ENCODE measurements at regions of chr7 and their contacts with region 1.

Region 1: DNA sequence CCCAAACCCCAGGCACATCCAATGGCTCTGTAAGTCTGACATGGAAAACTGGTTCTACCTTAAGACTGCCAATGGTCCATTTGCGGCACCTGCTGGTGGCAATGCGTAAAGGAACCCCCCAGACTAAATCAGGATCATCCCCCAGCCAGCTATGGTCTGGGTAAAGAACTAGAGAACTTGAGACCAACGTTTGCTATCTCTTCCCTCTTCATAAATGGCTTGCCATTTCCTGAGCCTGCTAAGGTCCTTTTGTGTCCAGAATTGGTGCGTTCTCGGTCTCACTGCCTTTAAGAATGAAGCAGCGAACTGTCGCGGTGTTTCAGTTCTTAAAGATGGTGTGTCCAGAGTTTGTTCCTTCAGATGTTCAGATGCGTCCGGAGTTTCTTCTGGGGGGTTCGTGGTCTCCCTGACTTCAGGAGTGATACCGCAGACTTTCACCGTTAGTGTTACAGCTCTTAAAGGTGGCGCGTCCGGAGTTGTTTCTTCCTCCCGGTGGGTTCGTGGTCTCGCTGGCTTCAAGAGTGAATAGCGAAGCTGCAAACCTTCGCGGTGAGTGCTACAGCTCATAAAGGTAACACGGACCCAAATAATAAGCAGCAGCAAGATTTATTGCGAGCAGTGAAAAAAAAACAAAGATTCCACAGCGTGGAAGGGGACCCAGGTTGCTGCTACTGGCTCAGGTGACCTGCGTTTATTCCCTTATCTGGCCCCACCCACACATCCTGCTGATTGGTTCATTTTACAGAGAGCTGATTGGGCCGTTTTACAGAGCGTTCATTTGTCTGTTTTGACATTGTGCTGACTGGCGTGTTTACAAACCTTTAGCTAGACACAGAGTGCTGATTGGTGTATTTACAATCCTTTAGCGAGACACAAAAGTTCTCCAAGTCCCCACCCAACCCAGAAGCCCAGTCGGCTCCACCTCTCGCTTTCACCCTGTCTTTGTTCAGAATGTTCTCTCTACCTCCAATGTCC is 95.4 kb downstream of the ELMO1 start:
- DNase-seq: peak; percentile 37 to 90 (median 82)
- ATAC-seq: peak; percentile 91
- H3K4me3 ChIP-seq: peak overlapping the region; percentile 93
- H3K4me3 Mint-ChIP-seq: peak overlapping the region; percentile 84 to 98 (median 95)
- H3K27ac ChIP-seq: peak overlapping the region; percentile 75
- H3K27ac Mint-ChIP-seq: peak overlapping the region; percentile 86 to 97 (median 92)
- H3K4me1 ChIP-seq: peaks cover 15 to 44% of the 10 kb centered on the region in 2 donors
- H3K4me1 Mint-ChIP-seq: peaks cover 71 to 97% (median 93%) of the 10 kb centered on the region in 7 donors
- H3K27me3 ChIP-seq: no peaks in the 10 kb centered on the region
- H3K27me3 Mint-ChIP-seq: no peaks in the 10 kb centered on the region

Region 2: GRCh38 chr7:36366718-36367560 is 986.3 kb before region 1 on chr7:
- CTCF ChIA-PET with region 1: no interaction called
- POLR2A ChIA-PET with region 1: no interaction called
- intact Hi-C with region 1: loop called in 1 of 2 experiments (anchors 10 kb)
- DNase-seq: peak; percentile 84 to 92 (median 91)
- ATAC-seq: peak; percentile 98
- H3K4me3 ChIP-seq: peak overlapping the region; percentile 76
- H3K4me3 Mint-ChIP-seq: peak overlapping the region; percentile 80 to 97 (median 93)
- H3K27ac ChIP-seq: peak overlapping the region; percentile 70
- H3K27ac Mint-ChIP-seq: peak overlapping the region in 8 of 9 donors; percentile 51 to 94 (median 82)
- H3K4me1 ChIP-seq: peaks cover 0 to 5% of the 10 kb centered on the region in 2 donors
- H3K4me1 Mint-ChIP-seq: peaks cover 0 to 8% (median 5%) of the 10 kb centered on the region in 7 donors
- H3K27me3 ChIP-seq: no peaks in the 10 kb centered on the region
- H3K27me3 Mint-ChIP-seq: peaks cover 0 to 57% (median 0%) of the 10 kb centered on the region in 5 donors

Region 3: GRCh38 chr7:36644625-36645422 is 708.4 kb before region 1 on chr7:
- CTCF ChIA-PET with region 1: no interaction called
- POLR2A ChIA-PET with region 1: no interaction called
- intact Hi-C with region 1: no loop called
- DNase-seq: no peak
- ATAC-seq: no peak
- H3K4me3 ChIP-seq: no peak overlapping the region
- H3K4me3 Mint-ChIP-seq: peak overlapping the region in 4 of 10 donors; percentile 22 to 43 (median 28)
- H3K27ac ChIP-seq: peak overlapping the region; percentile 14
- H3K27ac Mint-ChIP-seq: peak overlapping the region in 8 of 9 donors; percentile 74 to 92 (median 85)
- H3K4me1 ChIP-seq: peaks cover 24 to 39% of the 10 kb centered on the region in 2 donors
- H3K4me1 Mint-ChIP-seq: peaks cover 24 to 78% (median 67%) of the 10 kb centered on the region in 7 donors
- H3K27me3 ChIP-seq: no peaks in the 10 kb centered on the region
- H3K27me3 Mint-ChIP-seq: peaks cover 0 to 5% (median 0%) of the 10 kb centered on the region in 5 donors

Region 4: GRCh38 chr7:36677769-36678437 is 675.4 kb before region 1 on chr7:
- CTCF ChIA-PET with region 1: no interaction called
- POLR2A ChIA-PET with region 1: no interaction called
- intact Hi-C with region 1: loop called in 1 of 2 experiments (anchors 5 kb)
- DNase-seq: peak in 5 of 9 donors; percentile 5 to 68 (median 25)
- ATAC-seq: peak; percentile 19
- H3K4me3 ChIP-seq: peak overlapping the region; percentile 5
- H3K4me3 Mint-ChIP-seq: peak overlapping the region; percentile 46 to 84 (median 67)
- H3K27ac ChIP-seq: peak overlapping the region; percentile 55
- H3K27ac Mint-ChIP-seq: peak overlapping the region; percentile 83 to 98 (median 89)
- H3K4me1 ChIP-seq: peaks cover 14 to 29% of the 10 kb centered on the region in 2 donors
- H3K4me1 Mint-ChIP-seq: peaks cover 12 to 72% (median 57%) of the 10 kb centered on the region in 7 donors
- H3K27me3 ChIP-seq: no peaks in the 10 kb centered on the region
- H3K27me3 Mint-ChIP-seq: no peaks in the 10 kb centered on the region

Region 5: DNA sequence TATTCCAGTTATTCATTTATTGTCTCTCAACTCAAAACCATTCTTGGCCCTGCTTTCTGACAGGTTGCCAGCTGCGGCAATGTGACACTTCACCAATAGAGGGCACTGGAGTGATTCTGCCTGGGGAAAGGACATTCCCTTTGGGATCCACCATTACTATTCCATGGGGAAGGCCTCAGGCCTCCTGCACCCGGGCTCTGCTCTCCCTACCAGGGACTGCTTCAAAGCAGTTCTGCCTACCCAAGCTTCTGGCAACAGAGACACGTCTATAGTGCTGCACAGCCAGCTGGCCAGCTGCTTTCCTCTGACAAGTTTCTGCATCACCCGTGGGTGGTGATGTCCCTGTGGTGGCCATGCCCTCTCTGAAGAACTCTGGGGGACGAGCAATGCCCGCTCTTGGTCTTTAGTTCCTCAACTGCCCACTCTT is 68.4 kb before region 1 on chr7:
- CTCF ChIA-PET with region 1: interaction called, 18 read pairs
- POLR2A ChIA-PET with region 1: interaction called, 4 read pairs
- intact Hi-C with region 1: loop called (anchors 1 kb)
- DNase-seq: peak in 7 of 9 donors; percentile 15 to 38 (median 24)
- ATAC-seq: peak; percentile 59
- H3K4me3 ChIP-seq: no peak overlapping the region
- H3K4me3 Mint-ChIP-seq: no peak overlapping the region
- H3K27ac ChIP-seq: no peak overlapping the region
- H3K27ac Mint-ChIP-seq: peak overlapping the region in 5 of 9 donors; percentile 8 to 76 (median 26)
- H3K4me1 ChIP-seq: peaks cover 8 to 18% of the 10 kb centered on the region in 2 donors
- H3K4me1 Mint-ChIP-seq: peaks cover 38 to 80% (median 61%) of the 10 kb centered on the region in 7 donors
- H3K27me3 ChIP-seq: no peaks in the 10 kb centered on the region
- H3K27me3 Mint-ChIP-seq: no peaks in the 10 kb centered on the region

Region 6: DNA sequence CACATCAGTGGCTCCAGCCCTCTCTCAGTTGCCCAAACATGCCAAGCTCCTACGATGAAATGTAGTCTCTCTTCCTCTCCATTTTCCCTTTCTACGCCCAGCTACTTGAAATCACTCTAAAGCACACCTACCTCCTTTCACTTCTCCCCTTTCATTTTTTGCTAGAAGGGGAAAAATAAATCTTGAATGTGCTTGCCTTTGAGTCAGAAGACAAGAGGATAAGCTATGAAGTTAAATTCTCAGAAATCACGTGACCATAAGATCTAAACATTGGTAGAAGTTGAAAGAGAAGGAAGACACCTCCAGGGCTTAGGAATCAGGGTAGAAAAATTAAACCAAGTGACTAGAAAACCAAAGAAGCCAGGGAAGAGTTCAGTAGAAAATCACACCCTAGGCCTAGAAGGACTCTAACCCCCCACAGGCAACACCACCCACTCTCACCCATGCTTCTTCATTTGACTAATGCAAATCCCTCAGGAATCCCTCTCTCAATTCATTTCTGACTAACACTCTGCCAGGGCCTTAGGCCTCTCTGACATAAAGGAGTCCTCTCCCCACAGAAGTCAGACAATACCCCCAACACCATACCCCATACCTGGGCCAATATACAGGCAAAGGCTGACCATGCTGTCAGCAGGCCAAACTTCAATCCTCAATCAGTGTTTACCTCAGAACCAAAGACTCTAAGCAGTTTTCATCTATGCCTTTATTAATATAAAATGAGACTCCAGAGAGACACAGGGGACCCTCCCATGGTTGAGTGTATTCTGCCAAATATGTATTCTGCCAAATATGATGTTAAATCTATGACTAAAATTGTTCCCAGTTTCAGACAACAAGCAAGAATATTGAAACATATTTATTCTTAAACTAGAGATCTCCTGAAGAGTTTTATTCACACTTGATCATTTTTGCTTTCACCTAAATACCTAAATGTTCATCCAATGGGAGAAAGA is 10.6 kb after region 1 on chr7:
- CTCF ChIA-PET with region 1: interaction called, 14 read pairs
- POLR2A ChIA-PET with region 1: interaction called, 7 read pairs
- intact Hi-C with region 1: loop called in 1 of 2 experiments (anchors 1 kb)
- DNase-seq: peak in 6 of 9 donors; percentile 33 to 59 (median 43)
- ATAC-seq: peak; percentile 60
- H3K4me3 ChIP-seq: peak overlapping the region; percentile 2
- H3K4me3 Mint-ChIP-seq: peak overlapping the region; percentile 55 to 87 (median 73)
- H3K27ac ChIP-seq: peak overlapping the region; percentile 63
- H3K27ac Mint-ChIP-seq: peak overlapping the region; percentile 86 to 97 (median 92)
- H3K4me1 ChIP-seq: peaks cover 15 to 58% of the 10 kb centered on the region in 2 donors
- H3K4me1 Mint-ChIP-seq: peaks cover 48 to 96% (median 86%) of the 10 kb centered on the region in 7 donors
- H3K27me3 ChIP-seq: no peaks in the 10 kb centered on the region
- H3K27me3 Mint-ChIP-seq: no peaks in the 10 kb centered on the region

Region 7: DNA sequence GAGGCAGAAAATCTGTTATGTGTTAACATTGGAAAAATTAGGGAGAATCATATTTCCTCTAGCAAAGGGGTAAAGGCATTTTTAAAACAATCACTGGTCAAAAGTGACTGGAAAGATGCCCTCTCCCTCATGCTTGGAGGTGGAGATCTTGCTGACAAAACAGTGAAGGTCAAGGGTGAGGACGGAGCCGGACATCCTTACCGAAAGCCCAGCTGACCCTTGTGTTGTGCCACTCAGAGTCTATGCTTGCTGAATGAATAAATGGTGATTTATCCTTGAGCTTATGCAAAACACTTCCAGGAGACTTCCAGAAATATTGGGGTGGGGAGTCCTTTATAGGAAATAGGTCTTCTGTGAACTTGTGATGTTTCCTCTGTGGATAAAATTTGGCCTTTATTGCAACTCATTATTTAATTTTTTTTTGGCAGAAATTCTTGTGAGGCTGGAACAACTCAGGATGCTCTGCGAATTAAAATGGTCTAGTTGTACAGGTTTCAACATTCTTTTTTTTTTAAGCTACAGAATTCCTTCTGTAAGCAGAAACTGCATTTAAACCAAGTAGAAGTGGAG is 123.7 kb after region 1 on chr7:
- CTCF ChIA-PET with region 1: no interaction called
- POLR2A ChIA-PET with region 1: no interaction called
- intact Hi-C with region 1: no loop called
- DNase-seq: no peak
- ATAC-seq: no peak
- H3K4me3 ChIP-seq: no peak overlapping the region
- H3K4me3 Mint-ChIP-seq: no peak overlapping the region
- H3K27ac ChIP-seq: no peak overlapping the region
- H3K27ac Mint-ChIP-seq: no peak overlapping the region
- H3K4me1 ChIP-seq: no peaks in the 10 kb centered on the region
- H3K4me1 Mint-ChIP-seq: peaks cover 0 to 6% (median 0%) of the 10 kb centered on the region in 7 donors
- H3K27me3 ChIP-seq: no peaks in the 10 kb centered on the region
- H3K27me3 Mint-ChIP-seq: peaks cover 5 to 53% (median 12%) of the 10 kb centered on the region in 5 donors

Region 8: GRCh38 chr7:37504801-37505200 is 151.5 kb after region 1 on chr7:
- CTCF ChIA-PET with region 1: interaction called, 4 read pairs
- POLR2A ChIA-PET with region 1: interaction called, 4 read pairs
- intact Hi-C with region 1: loop called in 1 of 2 experiments (anchors 5 kb)
- DNase-seq: no peak
- ATAC-seq: no peak
- H3K4me3 ChIP-seq: no peak overlapping the region
- H3K4me3 Mint-ChIP-seq: no peak overlapping the region
- H3K27ac ChIP-seq: no peak overlapping the region
- H3K27ac Mint-ChIP-seq: no peak overlapping the region
- H3K4me1 ChIP-seq: no peaks in the 10 kb centered on the region
- H3K4me1 Mint-ChIP-seq: no peaks in the 10 kb centered on the region
- H3K27me3 ChIP-seq: no peaks in the 10 kb centered on the region
- H3K27me3 Mint-ChIP-seq: peaks cover 0 to 44% (median 13%) of the 10 kb centered on the region in 5 donors

Measured in naive thymus-derived CD4-positive, alpha-beta T cell (primary cell).